CD8-positive, alpha-beta T cell (primary cell): ENCODE measurements at regions of chr11 and their contacts with region 1.

Region 1: DNA sequence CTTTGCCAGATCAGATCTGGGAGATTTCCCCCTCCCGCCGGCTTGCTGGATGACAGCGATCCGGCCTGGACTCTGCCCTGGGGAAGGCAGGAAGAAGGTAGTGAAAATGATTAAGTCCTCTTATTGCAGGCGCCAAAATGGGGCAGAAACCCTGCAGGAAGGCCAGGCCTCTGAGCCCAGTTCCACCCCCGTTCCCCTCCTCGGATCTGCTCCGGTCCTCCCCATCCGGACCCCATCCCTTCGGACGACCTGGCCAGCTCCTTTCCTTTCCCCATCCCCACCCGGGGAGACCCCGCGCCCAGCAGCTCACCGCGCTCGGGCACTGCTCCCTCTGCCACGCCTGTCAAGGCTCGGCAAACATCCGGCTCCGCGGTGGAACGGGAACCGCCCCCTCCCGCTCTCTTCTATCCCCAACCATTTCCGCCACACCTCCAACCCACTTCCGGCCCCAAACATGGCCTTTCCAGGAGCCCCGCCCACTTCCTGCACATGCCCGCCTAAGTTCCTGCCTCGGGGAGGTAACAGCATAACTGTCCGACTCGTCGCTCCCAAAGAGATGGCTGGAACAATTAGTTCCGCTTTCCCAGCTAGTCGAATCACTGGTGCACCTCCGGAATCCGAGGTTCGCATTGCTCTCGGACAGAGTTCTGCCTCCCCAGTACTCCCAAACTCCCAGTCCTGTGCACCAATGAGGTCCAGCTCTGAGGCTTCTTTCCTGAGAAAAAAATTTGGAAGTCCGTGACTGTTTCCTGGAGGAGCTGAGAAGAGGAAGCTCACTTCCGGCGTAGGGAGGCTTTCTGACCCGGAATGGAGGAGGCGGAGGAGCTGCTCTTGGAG is at the starts of genes ARHGAP1 and ZNF408:
- DNase-seq: peak; percentile 98 to 100 (median 99)
- ATAC-seq: peak; percentile 97
- H3K4me3 ChIP-seq: peak within 1 kb of the TSS; percentile 79 to 92
- H3K4me3 Mint-ChIP-seq: peak within 1 kb of the TSS; percentile 99
- H3K27ac ChIP-seq: peak within 1 kb of the TSS; percentile 73 to 82
- H3K27ac Mint-ChIP-seq: peak within 1 kb of the TSS; percentile 96
- H3K4me1 ChIP-seq: peaks cover 57% of the 10 kb centered on the region
- H3K4me1 Mint-ChIP-seq: peaks cover 53% of the 10 kb centered on the region
- H3K27me3 ChIP-seq: no peaks in the 10 kb centered on the region
- H3K27me3 Mint-ChIP-seq: no peaks in the 10 kb centered on the region
- CTCF ChIP-seq: no peak
- total RNA-seq, gene ARHGAP1: 33.4 to 36.9 TPM
- total RNA-seq, gene ZNF408: 24.0 to 24.3 TPM

Region 2: GRCh38 chr11:46121724-46122477 is 578.6 kb before region 1 on chr11:
- CTCF ChIA-PET with region 1: no interaction called
- POLR2A ChIA-PET with region 1: interaction called, 3 read pairs
- intact Hi-C with region 1: loop called in 1 of 2 experiments (anchors 2 kb)
- DNase-seq: peak; percentile 50 to 92 (median 73)
- ATAC-seq: peak; percentile 54
- H3K4me3 ChIP-seq: peak overlapping the region; percentile 58 to 63
- H3K4me3 Mint-ChIP-seq: peak overlapping the region; percentile 88
- H3K27ac ChIP-seq: peak overlapping the region; percentile 1 to 26
- H3K27ac Mint-ChIP-seq: peak overlapping the region; percentile 96
- H3K4me1 ChIP-seq: peaks cover 30% of the 10 kb centered on the region
- H3K4me1 Mint-ChIP-seq: peaks cover 33% of the 10 kb centered on the region
- H3K27me3 ChIP-seq: no peaks in the 10 kb centered on the region
- H3K27me3 Mint-ChIP-seq: no peaks in the 10 kb centered on the region
- CTCF ChIP-seq: no peak

Region 3: DNA sequence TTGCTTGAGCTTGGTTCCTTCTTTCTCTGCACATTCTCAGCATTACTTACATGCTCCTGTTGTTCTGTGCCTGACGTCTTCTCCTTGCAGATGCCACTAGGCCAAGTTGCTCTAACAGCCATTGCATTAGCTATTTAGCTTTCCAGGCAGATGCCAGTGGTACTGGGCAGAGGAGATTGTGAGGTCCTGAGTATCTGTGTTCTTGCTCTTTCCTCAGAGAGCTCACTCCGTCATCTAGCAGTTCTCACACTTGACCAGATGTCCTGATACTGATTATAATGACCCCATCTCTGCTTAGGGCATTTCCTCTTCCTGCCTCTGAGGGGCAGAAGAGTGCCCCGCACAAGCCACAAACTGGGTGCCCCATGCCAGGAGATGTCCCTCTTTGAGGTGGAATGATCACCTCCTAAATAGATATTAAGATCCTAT is 30.7 kb before region 1 on chr11:
- CTCF ChIA-PET with region 1: interaction called, 43 read pairs
- POLR2A ChIA-PET with region 1: interaction called, 27 read pairs
- intact Hi-C with region 1: loop called in 1 of 2 experiments (anchors 1 kb)
- DNase-seq: peak in 1 of 9 experiments; percentile 30
- ATAC-seq: no peak
- H3K4me3 ChIP-seq: no peak overlapping the region
- H3K4me3 Mint-ChIP-seq: peak overlapping the region; percentile 15
- H3K27ac ChIP-seq: peak overlapping the region in 1 of 2 experiments; percentile 61
- H3K27ac Mint-ChIP-seq: peak overlapping the region; percentile 29
- H3K4me1 ChIP-seq: peaks cover 58% of the 10 kb centered on the region
- H3K4me1 Mint-ChIP-seq: peaks cover 54% of the 10 kb centered on the region
- H3K27me3 ChIP-seq: no peaks in the 10 kb centered on the region
- H3K27me3 Mint-ChIP-seq: no peaks in the 10 kb centered on the region
- CTCF ChIP-seq: no peak

Region 4: DNA sequence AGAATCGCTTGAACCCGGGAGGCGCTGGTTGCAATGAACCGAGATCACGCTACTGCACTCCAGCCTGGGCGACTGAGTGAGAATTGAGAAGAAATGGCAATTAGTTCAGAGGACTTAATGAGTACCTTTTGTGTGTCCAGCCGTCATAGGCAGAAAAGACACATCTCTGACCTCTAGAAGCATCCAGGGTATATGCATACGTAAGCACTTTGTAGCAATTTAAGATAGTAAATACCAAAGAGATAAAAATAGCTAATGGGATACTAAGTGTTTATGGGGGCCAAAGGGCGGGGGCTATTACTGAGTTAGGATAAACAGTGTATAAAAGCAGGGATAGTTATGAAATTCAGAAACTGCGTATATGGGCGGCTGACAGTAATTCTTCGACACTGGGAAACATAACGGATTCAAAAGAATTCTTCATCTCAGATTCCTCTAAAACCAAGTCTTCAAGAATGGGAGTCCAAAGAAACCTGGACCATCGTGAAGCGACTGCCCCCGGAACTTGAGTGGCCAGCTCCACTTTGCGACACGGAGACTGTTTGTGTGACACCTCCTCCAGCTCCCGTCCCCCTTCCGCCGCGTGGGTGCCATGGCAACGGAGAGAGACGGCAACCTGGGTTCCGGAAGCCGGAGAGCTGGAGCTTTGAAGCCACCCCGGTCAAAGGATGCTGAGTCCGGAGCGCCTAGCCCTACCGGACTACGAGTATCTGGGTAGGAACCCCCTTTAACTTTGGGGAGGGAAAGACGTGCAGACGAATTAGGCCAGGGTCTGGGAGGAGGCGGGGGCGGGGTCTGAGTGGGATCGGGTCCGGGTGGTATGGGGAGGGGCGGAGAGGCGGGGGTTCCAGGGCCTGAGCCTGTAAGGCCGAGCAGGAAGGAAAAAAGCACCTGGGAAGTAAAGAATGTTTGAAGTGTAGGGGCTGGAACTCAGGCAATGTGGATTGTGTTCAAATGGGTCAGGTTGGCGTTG is 236.0 kb after region 1 on chr11 and contains the start of gene CSTPP1:
- CTCF ChIA-PET with region 1: no interaction called
- POLR2A ChIA-PET with region 1: interaction called, 5 read pairs
- intact Hi-C with region 1: loop called in 1 of 2 experiments (anchors 2 kb)
- DNase-seq: peak; percentile 80 to 97 (median 93)
- ATAC-seq: peak; percentile 96
- H3K4me3 ChIP-seq: peak within 1 kb of the TSS; percentile 73 to 82
- H3K4me3 Mint-ChIP-seq: peak within 1 kb of the TSS; percentile 97
- H3K27ac ChIP-seq: peak within 1 kb of the TSS; percentile 58 to 71
- H3K27ac Mint-ChIP-seq: peak within 1 kb of the TSS; percentile 95
- H3K4me1 ChIP-seq: peaks cover 9% of the 10 kb centered on the region
- H3K4me1 Mint-ChIP-seq: peaks cover 20% of the 10 kb centered on the region
- H3K27me3 ChIP-seq: no peaks in the 10 kb centered on the region
- H3K27me3 Mint-ChIP-seq: peaks cover 6% of the 10 kb centered on the region
- CTCF ChIP-seq: no peak
- total RNA-seq, gene CSTPP1: 4.1 to 4.6 TPM

Region 5: DNA sequence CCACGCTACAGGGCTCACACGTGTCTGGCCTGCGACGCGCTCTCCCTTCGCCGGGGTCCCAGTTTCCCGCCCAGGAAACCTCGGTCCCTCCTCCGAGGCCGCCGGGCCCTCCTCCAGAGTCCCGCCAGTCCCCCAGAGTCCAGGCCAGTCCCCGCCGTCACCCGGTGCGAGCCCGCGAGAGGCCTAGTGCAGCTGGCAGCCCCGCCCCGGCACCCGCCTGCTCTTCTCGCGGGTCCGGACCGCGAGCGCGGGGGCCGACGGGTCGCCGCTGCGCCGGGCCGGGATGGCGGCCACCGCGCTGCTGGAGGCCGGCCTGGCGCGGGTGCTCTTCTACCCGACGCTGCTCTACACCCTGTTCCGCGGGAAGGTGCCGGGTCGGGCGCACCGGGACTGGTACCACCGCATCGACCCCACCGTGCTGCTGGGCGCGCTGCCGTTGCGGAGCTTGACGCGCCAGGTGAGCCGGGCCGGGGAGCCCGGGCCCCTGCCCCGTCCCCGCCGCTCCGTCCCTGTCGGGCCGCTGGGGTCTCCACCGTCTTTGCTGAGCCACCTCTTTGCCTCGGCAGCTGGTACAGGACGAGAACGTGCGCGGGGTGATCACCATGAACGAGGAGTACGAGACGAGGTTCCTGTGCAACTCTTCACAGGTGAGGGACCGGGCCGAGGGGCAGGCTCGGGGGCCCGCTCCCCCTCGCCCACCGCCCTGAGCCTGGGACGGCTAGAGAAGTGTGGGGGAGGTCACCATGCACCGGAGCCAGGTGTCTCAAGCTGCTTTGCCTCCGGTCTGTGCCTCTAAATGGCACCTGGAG is 865.1 kb after region 1 on chr11 and contains the start of gene PTPMT1:
- CTCF ChIA-PET with region 1: no interaction called
- POLR2A ChIA-PET with region 1: interaction called, 3 read pairs
- intact Hi-C with region 1: loop called in 1 of 2 experiments (anchors 10 kb)
- DNase-seq: peak; percentile 26 to 79 (median 63)
- ATAC-seq: peak; percentile 85
- H3K4me3 ChIP-seq: peak within 1 kb of the TSS; percentile 76 to 83
- H3K4me3 Mint-ChIP-seq: peak within 1 kb of the TSS; percentile 85
- H3K27ac ChIP-seq: peak within 1 kb of the TSS; percentile 76 to 86
- H3K27ac Mint-ChIP-seq: peak within 1 kb of the TSS; percentile 84
- H3K4me1 ChIP-seq: peaks cover 13% of the 10 kb centered on the region
- H3K4me1 Mint-ChIP-seq: peaks cover 27% of the 10 kb centered on the region
- H3K27me3 ChIP-seq: no peaks in the 10 kb centered on the region
- H3K27me3 Mint-ChIP-seq: no peaks in the 10 kb centered on the region
- CTCF ChIP-seq: no peak
- total RNA-seq, gene PTPMT1: 24.4 to 24.5 TPM